Activated naive CD4-positive, alpha-beta T cell treated with anti-CD3 and anti-CD28 coated beads for 36 hours (primary cell): ENCODE measurements at regions of chr3 and their contacts with region 1.

Region 1: DNA sequence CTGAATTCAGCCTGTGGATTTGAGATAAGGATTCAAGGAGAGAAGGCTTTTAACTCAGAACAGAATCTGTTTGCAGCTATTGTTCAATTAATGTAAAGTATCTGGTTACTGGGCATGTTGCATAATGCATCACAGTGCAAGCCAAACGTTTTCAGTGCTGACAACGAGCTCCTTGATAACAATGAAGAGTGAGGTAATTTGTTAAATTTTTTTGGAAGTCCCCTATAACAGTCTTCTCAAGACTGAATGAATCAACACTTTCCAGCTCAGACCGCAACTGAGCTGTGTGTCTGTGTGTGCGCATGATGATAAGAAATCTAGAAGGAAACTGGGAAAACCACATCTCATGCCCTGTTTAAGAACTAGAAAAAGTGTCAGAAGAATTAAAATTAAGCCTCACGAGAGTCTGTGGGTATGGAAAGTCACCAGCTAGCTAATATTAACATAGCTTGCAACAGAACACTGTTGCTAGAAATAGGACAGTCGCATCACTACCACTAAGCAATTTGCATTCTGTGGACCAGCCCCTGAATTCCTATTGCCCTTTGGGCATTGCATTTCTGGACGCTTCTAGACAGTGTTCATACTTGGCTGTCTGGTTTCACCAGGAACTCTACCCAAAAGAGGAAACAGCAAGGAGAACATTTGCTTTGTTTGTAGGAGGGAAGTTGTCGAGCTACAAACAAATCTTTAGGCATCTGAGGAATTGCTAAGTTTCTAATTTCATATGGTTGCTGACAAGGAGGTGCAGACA is 43.7 kb upstream of the ATP2C1 start:
- DNase-seq: peak; percentile 83
- H3K4me3 Mint-ChIP-seq: peak overlapping the region; percentile 45
- H3K27ac Mint-ChIP-seq: peak overlapping the region; percentile 59
- H3K4me1 Mint-ChIP-seq: peaks cover 27% of the 10 kb centered on the region
- H3K27me3 Mint-ChIP-seq: peaks cover 44% of the 10 kb centered on the region

Region 2: DNA sequence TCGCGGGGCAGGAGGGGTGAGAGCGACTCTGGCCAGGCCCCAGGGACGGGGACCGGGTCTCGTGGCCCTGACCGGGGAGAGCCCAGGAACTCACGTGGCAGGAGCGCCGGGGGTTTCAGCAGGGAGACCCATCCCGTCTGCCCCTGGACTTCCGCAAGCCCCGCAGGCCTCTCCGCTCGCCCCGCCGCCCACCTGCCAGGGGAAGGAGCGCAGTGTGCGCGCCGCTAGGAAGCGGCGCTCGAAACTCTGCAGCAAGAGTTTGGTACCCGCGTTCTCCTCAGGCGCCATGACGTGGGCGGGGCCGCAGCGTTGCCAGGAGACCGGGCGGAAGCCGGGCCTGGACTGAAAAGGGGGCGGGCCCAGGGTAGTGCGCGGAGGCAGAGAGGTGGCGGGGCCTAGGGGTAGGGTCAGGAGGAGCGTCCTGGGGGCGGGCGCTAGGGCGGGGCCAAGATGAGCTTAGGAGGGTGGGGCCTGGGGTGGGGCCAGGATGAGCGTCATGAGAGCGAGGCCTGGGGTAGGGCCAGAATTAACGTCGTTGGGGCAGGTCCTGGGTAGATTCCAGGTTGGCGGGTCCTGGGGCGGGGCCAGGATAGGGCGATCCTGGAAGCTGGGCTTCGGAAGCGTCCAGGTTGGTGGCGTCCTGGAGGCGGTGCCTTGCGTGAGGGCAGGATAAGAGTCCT is 738.9 kb before region 1 on chr3:
- CTCF ChIA-PET with region 1: no interaction called
- intact Hi-C with region 1: loop called (anchors 1 kb)
- DNase-seq: peak; percentile 99
- H3K4me3 Mint-ChIP-seq: peak overlapping the region; percentile 92
- H3K27ac Mint-ChIP-seq: peak overlapping the region; percentile 95
- H3K4me1 Mint-ChIP-seq: peaks cover 18% of the 10 kb centered on the region
- H3K27me3 Mint-ChIP-seq: no peaks in the 10 kb centered on the region

Region 3: DNA sequence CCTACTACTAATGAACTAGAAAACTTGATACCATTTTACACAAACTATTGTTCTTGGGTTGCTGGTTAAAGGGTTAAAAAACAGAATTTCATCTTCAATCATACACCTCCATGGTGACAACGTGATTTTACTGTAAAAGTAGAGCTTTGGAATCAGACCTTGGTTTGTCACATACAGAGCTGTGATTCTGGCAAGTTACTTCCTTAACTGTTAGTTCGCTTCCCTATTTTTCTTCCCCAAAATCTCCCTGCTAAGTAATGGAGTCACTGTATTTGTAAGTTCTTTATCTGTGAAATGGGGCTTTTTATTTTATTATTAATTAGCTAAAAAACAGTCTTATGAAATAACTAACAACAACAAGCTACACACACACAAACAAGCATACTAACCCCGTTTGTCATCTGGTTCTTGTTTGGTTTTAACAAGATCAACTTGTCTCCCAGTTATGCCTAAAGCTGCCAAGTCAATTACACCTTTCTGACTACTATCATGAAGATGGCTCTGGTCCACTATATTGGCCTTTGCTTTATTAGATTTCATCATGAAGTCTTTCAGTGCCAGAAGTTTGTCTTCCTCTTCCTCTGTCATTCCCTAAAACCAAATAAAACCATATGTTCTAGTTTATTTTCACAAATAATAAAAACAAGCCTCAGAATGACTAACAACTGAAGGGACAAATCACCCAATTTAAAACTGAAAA is 142.2 kb before region 1 on chr3:
- CTCF ChIA-PET with region 1: no interaction called
- intact Hi-C with region 1: no loop called
- DNase-seq: no peak
- H3K4me3 Mint-ChIP-seq: no peak overlapping the region
- H3K27ac Mint-ChIP-seq: no peak overlapping the region
- H3K4me1 Mint-ChIP-seq: no peaks in the 10 kb centered on the region
- H3K27me3 Mint-ChIP-seq: no peaks in the 10 kb centered on the region

Region 4: GRCh38 chr3:130907966-130908365 is 57.7 kb after region 1 on chr3:
- CTCF ChIA-PET with region 1: no interaction called
- intact Hi-C with region 1: loop called (anchors 1 kb)
- DNase-seq: no peak
- H3K4me3 Mint-ChIP-seq: no peak overlapping the region
- H3K27ac Mint-ChIP-seq: no peak overlapping the region
- H3K4me1 Mint-ChIP-seq: peaks cover 44% of the 10 kb centered on the region
- H3K27me3 Mint-ChIP-seq: no peaks in the 10 kb centered on the region

Region 5: DNA sequence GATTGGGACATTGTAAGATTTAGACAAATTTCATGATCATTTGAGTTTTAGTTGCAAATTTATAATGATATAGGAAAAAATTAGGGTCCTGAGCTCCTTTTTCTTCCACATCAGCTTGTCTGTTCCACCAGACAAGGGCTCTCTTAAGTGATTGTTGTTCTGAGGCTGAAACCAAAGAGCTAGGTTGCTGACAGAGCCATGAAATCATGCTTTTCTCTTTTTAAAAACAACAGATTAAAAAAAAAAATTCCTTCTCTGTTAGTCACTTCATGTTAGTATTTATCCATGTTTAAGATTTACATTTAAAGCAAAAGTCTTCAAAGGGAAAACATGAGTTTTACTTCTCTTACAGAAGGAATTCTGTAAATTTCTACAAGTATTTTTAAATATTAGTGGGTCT is 100.4 kb after region 1 on chr3:
- CTCF ChIA-PET with region 1: no interaction called
- intact Hi-C with region 1: no loop called
- DNase-seq: no peak
- H3K4me3 Mint-ChIP-seq: no peak overlapping the region
- H3K27ac Mint-ChIP-seq: no peak overlapping the region
- H3K4me1 Mint-ChIP-seq: peaks cover 11% of the 10 kb centered on the region
- H3K27me3 Mint-ChIP-seq: no peaks in the 10 kb centered on the region

Region 6: GRCh38 chr3:131502530-131503245 is 652.5 kb after region 1 on chr3 and contains the start of gene MRPL3:
- CTCF ChIA-PET with region 1: no interaction called
- intact Hi-C with region 1: loop called (anchors 1 kb)
- DNase-seq: peak; percentile 90
- H3K4me3 Mint-ChIP-seq: peak within 1 kb of the TSS; percentile 91
- H3K27ac Mint-ChIP-seq: peak within 1 kb of the TSS; percentile 88
- H3K4me1 Mint-ChIP-seq: peaks cover 37% of the 10 kb centered on the region
- H3K27me3 Mint-ChIP-seq: no peaks in the 10 kb centered on the region
- total RNA-seq, gene MRPL3: 151 to 161 TPM

Region 7: DNA sequence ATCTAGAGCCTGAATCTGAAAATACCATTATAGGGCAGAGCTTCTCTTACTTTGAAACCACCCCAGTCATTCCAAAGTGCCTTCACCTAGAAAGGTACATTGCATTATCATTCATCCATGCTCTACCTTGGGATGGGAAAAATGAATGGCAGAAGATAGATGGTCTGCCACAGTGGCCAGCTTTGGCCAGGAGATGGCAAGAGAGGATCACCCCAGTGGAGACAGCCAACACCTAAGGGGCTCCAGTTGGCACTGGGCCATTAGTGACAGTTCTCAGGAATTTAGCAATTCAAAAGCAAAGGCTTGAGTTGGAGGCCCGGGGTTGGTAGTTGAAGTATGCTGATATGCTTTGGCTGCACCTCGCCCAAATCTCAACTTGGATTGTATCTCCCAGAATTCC is 906.2 kb after region 1 on chr3:
- CTCF ChIA-PET with region 1: no interaction called
- intact Hi-C with region 1: no loop called
- DNase-seq: no peak
- H3K4me3 Mint-ChIP-seq: no peak overlapping the region
- H3K27ac Mint-ChIP-seq: no peak overlapping the region
- H3K4me1 Mint-ChIP-seq: no peaks in the 10 kb centered on the region
- H3K27me3 Mint-ChIP-seq: peaks cover 31% of the 10 kb centered on the region